ENCODE measurements at regions of chr16 and their contacts with region 1.

Region 1: DNA sequence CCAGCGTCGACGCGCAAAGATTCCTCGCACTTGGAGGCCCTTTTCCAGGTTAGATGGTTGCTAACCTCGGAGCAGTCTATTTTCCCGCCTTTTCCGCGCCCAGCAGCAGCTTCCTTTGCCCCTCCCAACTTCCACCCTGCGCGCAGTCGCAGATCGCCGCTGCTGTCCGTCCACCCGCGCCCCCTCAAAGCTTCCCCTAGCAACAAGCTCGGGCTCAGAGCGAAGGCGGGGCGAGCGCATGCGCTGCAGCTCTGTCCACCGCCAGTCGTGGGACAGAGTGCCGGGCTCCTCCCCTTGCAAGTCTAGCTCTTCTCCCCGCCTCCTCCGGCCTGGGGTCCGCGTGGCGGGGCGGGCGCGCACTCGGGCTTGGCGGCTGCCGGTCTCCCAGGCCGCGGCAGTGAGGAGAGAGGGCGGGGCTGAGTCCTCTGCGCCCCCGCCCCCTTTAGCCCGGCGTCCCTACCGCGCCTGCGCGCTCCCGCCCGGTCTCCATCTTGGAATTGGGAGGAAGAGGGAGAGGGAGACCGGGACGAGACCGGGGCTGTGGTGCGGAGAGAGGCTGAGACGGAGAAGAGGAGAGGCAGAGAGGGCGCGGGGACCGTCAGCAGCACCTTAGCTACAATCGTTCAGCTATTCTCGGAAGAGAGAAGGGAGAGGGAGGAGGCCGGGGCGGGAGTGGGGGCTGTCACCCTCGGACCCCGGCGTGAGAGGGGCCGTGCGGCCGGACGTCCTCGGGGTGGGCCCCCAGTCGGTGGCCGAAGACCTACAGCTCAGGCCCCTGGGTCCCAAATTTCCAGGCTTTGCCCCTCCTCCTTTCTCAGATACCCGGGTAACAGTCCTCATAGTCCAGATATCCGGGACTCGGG is at the start of gene TAOK2:
- DNase-seq: peak; percentile 97
- H3K4me3 Mint-ChIP-seq: peak within 1 kb of the TSS; percentile 88
- H3K27ac Mint-ChIP-seq: peak within 1 kb of the TSS; percentile 79
- H3K4me1 Mint-ChIP-seq: peaks cover 37% of the 10 kb centered on the region
- H3K27me3 Mint-ChIP-seq: no peaks in the 10 kb centered on the region
- total RNA-seq, gene TAOK2: 44.2 TPM

Region 2: GRCh38 chr16:29926005-29926710 is 47.5 kb before region 1 on chr16 and contains the start of gene KCTD13:
- CTCF ChIA-PET with region 1: no interaction called
- POLR2A ChIA-PET with region 1: interaction called, 22 read pairs
- DNase-seq: peak; percentile 92
- H3K4me3 Mint-ChIP-seq: peak within 1 kb of the TSS; percentile 87
- H3K27ac Mint-ChIP-seq: peak within 1 kb of the TSS; percentile 87
- H3K4me1 Mint-ChIP-seq: peaks cover 36% of the 10 kb centered on the region
- H3K27me3 Mint-ChIP-seq: no peaks in the 10 kb centered on the region
- total RNA-seq, gene KCTD13: 34.5 to 36.0 TPM

Region 3: DNA sequence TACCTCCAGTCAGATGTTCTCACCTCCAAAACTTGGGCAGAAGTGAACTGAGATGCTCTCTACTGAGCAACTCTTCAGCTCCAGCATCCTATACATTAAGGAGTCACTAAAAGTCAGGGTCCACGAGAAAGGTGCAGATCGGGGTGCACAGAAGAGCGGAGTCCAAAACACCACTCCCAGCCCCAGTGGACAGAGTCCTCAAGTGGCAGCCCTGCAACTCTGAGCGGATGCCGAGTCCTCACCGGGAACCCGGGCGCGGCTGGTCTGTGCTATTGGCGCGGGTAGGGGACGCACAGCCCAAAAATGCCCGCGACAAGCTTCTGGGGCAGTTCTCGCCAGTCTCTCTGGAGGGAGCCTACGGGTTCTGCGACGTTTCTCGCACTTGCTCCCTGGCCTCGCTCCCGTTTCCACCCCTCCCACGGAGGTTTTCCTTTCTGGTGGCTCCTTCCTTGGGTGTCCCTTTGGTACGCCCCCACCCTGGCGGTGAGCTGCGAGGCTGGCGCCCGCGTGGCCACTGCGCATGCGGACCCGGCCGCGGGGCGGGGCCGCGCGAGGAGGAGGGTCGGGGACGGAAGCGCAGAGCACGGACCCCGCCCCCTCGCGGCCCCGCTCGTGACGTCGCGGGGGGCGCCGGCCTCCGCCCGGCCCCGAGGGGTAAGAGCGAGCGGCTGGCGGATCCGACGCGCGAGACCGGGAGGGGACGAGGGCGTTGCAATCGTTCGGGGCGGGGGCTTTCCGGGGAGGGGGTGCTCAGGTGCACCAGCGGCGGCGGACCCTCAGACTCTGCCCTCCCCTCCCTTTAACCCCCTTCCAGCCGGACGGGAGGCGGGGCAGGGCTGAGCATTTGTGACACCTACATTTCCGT is 11.9 kb before region 1 on chr16 and contains the start of gene TMEM219:
- CTCF ChIA-PET with region 1: interaction called, 29 read pairs
- POLR2A ChIA-PET with region 1: interaction called, 78 read pairs
- DNase-seq: peak; percentile 94
- H3K4me3 Mint-ChIP-seq: peak within 1 kb of the TSS; percentile 87
- H3K27ac Mint-ChIP-seq: peak within 1 kb of the TSS; percentile 82
- H3K4me1 Mint-ChIP-seq: peaks cover 25% of the 10 kb centered on the region
- H3K27me3 Mint-ChIP-seq: no peaks in the 10 kb centered on the region
- total RNA-seq, gene TMEM219: 68.9 to 78.7 TPM

Region 4: GRCh38 chr16:29989111-29989832 is 15.7 kb after region 1 on chr16:
- CTCF ChIA-PET with region 1: interaction called, 3 read pairs
- POLR2A ChIA-PET with region 1: interaction called, 99 read pairs
- DNase-seq: no peak
- H3K4me3 Mint-ChIP-seq: no peak overlapping the region
- H3K27ac Mint-ChIP-seq: no peak overlapping the region
- H3K4me1 Mint-ChIP-seq: peaks cover 6% of the 10 kb centered on the region
- H3K27me3 Mint-ChIP-seq: no peaks in the 10 kb centered on the region